Vagina (tissue), 2 donors: ENCODE measurements at regions of chrX and their contacts with region 1.

Region 1: GRCh38 chrX:122389005-122389404 is 795.1 kb upstream of the GRIA3 start:
- DNase-seq: no peak
- H3K4me3 ChIP-seq: no peak overlapping the region
- H3K27ac ChIP-seq: no peak overlapping the region
- H3K4me1 ChIP-seq: no peaks in the 10 kb centered on the region
- H3K27me3 ChIP-seq: no peaks in the 10 kb centered on the region
- CTCF ChIP-seq: no peak
- POLR2A ChIP-seq: no peak

Region 2: DNA sequence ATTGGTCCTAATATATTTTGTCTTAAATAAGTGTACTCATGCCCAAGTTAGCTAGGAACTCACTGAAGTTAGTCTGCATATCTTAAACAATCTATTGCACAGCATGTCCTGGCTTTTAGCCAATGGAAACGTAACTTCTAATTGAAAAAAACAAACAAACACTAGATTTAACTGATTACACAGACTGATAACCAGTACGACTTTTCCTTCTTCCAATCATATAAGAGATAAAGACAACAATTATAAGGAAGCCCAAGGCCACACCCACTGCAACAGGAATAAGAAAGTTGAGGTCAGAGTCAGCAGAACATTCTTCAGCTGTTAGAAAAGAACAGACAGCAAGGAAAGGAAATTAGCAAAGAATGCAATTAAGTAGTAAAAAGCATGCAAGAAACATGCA is 1960.7 kb before region 1 on chrX:
- intact Hi-C with region 1: loop called (anchors 5 kb)
- DNase-seq: no peak
- H3K4me3 ChIP-seq: no peak overlapping the region
- H3K27ac ChIP-seq: no peak overlapping the region
- H3K4me1 ChIP-seq: no peaks in the 10 kb centered on the region
- H3K27me3 ChIP-seq: no peaks in the 10 kb centered on the region
- CTCF ChIP-seq: no peak
- POLR2A ChIP-seq: no peak

Region 3: GRCh38 chrX:121298499-121298898 is 1090.5 kb before region 1 on chrX:
- intact Hi-C with region 1: no loop called
- DNase-seq: no peak
- H3K4me3 ChIP-seq: no peak overlapping the region
- H3K27ac ChIP-seq: no peak overlapping the region
- H3K4me1 ChIP-seq: no peaks in the 10 kb centered on the region
- H3K27me3 ChIP-seq: no peaks in the 10 kb centered on the region
- CTCF ChIP-seq: no peak
- POLR2A ChIP-seq: no peak

Region 4: DNA sequence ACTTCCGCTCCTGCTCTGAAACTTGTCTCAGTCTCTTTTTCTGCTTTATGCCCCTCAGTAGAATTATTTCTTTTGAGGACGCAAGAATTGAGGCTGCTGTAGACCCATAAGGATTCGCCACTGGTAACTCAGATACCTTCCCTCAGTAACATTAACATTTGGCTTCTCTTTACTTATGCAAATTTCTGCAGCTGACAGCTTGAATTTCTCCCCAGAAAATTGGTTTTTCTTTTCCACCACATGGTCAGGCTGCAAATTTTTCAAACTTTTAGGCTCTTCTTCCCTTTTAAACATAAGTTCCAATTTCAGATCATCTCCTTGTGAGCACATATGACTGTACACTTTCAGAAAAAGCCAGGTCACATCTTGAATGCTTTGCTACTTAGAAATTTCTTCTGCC is 44.2 kb before region 1 on chrX:
- intact Hi-C with region 1: no loop called
- DNase-seq: no peak
- H3K4me3 ChIP-seq: no peak overlapping the region
- H3K27ac ChIP-seq: no peak overlapping the region
- H3K4me1 ChIP-seq: no peaks in the 10 kb centered on the region
- H3K27me3 ChIP-seq: no peaks in the 10 kb centered on the region
- CTCF ChIP-seq: no peak
- POLR2A ChIP-seq: no peak

Region 5: GRCh38 chrX:122787231-122787630 is 398.2 kb after region 1 on chrX:
- intact Hi-C with region 1: no loop called
- DNase-seq: no peak
- H3K4me3 ChIP-seq: no peak overlapping the region
- H3K27ac ChIP-seq: no peak overlapping the region
- H3K4me1 ChIP-seq: no peaks in the 10 kb centered on the region
- H3K27me3 ChIP-seq: no peaks in the 10 kb centered on the region
- CTCF ChIP-seq: no peak
- POLR2A ChIP-seq: no peak